HEK293T (cell line): ENCODE measurements at regions of chr4 and their contacts with region 1.

Region 1: DNA sequence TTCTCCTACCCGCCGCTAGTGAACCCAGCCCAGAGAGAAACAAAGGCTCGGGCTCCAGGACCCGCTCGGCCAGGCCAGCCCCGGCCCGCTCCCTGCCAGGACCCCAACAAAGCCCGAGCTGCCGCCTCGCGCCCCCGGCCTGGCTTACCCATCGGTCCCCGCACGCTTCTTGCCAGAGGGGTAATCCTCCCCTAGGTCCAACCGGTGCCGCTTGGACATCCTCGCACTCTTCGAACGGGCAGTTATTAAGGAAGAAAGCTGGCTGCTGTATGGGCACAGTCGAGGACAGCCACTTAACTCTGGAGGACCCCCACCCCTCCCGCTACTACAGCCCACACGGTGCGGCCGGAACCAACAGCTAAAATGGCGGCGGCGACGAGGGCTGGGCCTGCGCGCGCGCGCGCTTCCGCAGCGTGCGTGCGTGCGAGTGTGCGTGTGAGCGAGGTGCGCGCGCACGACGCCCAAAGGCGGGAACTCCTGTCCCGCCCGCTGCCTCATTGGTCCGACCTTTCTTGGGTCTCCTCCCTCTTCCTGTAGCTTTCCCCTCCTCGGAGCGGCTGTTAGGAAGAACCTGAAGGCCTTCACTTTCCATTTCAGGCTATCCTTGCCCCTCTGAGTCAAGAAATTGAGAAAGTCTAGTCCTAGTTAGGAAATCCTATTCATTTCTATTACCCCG is at the start of gene DHX15:
- DNase-seq: peak; percentile 81

Region 2: DNA sequence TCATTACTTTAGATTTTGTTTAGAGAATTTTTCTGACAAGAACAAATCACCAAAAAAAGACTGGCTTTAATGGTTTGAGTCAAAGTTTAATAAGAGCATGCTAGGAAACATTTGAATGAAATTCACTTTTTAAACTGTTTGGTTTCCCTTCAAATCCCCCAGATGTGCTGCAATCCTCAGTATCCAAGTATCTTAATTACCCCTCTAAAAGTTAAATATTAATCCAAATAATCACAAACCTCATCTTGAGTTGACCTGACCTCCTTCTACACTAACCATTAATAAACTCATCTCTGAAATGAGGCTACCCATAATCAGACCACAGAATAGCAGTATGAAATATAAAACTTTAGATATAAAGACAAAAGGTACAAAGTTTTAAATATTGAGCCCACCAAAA is 10.1 kb before region 1 on chr4:
- CTCF ChIA-PET with region 1: interaction called, 3 read pairs
- POLR2A ChIA-PET with region 1: interaction called, 21 read pairs
- DNase-seq: no peak

Region 3: GRCh38 chr4:24594891-24595290 is 10.6 kb after region 1 on chr4:
- CTCF ChIA-PET with region 1: no interaction called
- POLR2A ChIA-PET with region 1: interaction called, 21 read pairs
- DNase-seq: no peak

Region 4: GRCh38 chr4:25180524-25181131 is 596.3 kb after region 1 on chr4:
- CTCF ChIA-PET with region 1: no interaction called
- POLR2A ChIA-PET with region 1: no interaction called
- DNase-seq: peak; percentile 28